ENCODE measurements at regions of chr16 and their contacts with region 1.

Region 1: GRCh38 chr16:11497851-11498289 is 88.8 kb downstream of the LITAF start:
- DNase-seq: peak in 1 of 10 donors; percentile 26

Region 2: GRCh38 chr16:11201498-11202259 is 296.2 kb before region 1 on chr16:
- intact Hi-C with region 1: no loop called
- DNase-seq: no peak

Region 3: DNA sequence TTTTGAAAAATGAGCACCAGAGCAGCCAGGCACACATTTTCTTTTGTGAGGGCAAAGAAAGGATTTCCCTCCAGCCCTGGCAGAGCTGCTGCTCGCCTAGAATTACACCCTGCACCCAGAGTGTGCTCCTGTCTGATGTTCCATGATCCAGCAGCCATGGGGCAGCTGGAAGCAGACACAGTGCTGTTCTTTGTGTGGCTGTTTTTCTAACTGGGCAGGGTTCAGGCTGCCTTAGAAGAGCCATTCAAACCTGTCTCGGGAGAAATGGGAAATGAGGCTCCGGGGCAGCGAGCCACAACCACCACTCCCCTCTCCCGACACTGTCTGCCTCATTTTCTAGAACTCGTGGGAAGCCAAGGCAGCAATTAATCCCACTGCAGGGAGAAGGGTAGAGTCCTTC is 59.9 kb after region 1 on chr16:
- intact Hi-C with region 1: loop called (anchors 10 kb)
- DNase-seq: peak; percentile 48 to 94 (median 66)

Region 4: GRCh38 chr16:11597239-11598101 is 99.6 kb after region 1 on chr16:
- intact Hi-C with region 1: no loop called
- DNase-seq: peak in 2 of 10 donors; percentile 50 to 65

Measured in posterior cingulate gyrus (tissue), 11 donors.